Left colon (tissue), 2 donors: ENCODE measurements at regions of chr15 and their contacts with region 1.

Region 1: DNA sequence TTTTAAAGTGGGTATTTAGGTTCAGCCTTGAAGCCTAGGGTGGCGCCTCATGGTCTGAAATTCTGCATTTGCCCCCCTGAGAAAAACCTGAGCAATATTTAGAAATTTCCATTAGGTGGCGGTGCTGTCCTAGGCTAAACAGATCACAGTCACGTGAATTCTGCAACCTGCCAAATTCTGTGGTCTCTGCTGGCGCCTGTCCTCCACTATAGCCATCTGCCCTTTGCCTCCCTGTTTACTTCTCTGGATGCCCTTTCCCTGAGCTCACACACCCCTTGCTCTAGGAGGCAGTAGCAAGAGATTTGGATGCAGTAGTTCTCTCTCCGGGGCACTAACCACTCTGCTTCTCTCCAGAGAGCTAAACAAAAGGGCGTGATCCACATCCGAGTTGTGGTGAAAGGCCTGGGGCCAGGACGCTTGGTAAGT is 9.1 kb downstream of the MRPS11 start:
- DNase-seq: no peak
- ATAC-seq: peak; percentile 76

Region 2: DNA sequence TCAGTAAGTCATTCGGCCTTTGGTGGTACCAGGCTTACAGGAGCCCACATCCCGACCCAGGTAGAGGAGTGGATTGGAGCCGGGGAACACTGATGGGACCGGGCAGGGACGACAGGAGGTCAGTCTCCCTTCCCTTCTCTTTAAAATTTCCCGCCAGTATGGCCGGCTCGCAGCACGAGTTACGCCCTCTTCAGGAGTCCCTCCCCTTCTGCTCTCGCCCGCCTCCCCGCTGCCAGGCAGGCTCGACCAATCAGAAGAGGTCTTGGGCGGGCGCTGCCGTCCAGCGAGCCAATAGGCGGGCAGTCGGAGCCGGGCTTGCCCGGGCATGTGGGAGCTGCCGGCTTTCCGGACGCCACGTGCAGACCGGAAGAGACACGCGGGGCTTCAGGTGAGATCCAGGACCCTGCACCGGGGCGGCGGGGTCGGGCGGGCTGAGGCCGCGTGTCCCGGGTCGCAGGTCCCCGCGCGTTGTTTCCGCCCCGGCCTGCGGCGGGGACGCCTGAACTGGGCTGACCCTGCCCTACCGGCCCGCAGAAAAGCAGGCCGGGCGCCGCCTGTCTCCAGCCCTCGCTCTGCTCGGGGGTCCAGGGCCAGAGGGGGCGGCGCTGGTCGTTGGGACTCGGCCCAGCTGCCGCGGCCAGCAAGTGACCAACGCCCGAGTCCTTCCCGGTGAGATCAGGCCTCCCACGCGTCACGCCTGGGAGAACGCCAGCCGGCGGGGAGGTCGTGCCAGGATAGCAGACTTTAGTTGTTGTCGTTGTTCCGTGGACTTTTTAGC is 144.5 kb after region 1 on chr15 and contains the start of gene AEN:
- intact Hi-C with region 1: loop called in 1 of 2 experiments (anchors 10 kb)
- DNase-seq: peak; percentile 94 to 96
- ATAC-seq: peak; percentile 97
- total RNA-seq, gene AEN: 11.4 to 16.9 TPM